ENCODE measurements at regions of chr5 and their contacts with region 1.

Region 1: GRCh38 chr5:57298295-57298984 is 124.6 kb downstream of the GPBP1 start:
- DNase-seq: peak; percentile 24
- H3K4me3 ChIP-seq: no peak overlapping the region
- CTCF ChIP-seq: peak; percentile 63

Region 2: DNA sequence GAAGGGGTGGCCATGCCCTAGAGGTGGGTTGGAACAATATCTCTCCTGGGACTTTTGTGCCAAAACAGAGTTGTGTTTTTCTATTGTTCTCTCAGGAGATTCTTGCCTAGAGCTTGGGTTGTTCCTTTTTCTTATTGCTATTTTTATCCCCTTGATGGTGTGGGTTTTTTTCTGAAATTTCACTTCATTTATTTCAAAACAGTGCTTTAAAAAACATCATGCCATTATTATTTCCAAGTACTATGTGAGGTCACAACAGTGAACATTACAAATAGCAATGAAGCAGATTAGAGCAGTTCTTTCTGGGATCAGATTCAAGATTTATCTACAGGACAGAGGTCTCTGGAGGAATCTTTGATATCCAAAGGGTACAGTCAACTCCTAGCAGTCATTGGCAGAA is 107.5 kb after region 1 on chr5:
- CTCF ChIA-PET with region 1: no interaction called
- POLR2A ChIA-PET with region 1: no interaction called
- DNase-seq: no peak
- H3K4me3 ChIP-seq: no peak overlapping the region
- CTCF ChIP-seq: no peak

Region 3: DNA sequence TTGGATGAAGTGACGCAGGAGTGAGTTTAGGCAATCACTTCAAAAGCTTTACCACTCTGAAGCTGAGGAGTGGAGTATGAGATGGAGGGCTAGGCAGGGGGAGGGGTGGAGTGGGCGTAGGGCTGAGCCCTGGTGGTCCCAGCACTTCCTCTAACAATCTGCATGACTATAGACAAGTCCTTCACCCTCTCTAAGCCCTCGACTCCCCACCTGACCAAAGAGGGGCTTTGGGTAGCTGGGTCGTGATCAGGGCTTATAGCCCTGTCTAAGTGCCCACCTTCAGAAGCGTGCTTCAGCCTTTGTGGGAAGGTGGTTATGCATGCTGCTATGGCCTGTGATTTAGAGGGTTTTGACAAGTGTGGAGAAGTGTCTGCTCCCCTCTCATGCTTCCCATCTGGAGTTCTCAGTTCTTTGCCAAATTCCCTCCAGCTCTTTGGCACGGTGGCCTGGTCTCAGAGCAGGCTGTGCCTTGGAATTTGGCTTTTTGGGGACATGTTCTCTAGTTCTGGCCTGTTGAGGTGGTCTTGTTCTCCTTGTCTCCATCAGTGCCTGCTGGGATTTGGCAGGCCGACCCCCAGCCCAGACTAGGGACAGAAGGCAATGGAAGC is 131.2 kb after region 1 on chr5:
- CTCF ChIA-PET with region 1: no interaction called
- POLR2A ChIA-PET with region 1: no interaction called
- DNase-seq: no peak
- H3K4me3 ChIP-seq: no peak overlapping the region
- CTCF ChIP-seq: no peak

Region 4: GRCh38 chr5:57494104-57495098 is 196.0 kb after region 1 on chr5:
- CTCF ChIA-PET with region 1: interaction called, 47 read pairs
- POLR2A ChIA-PET with region 1: no interaction called
- DNase-seq: peak; percentile 94
- H3K4me3 ChIP-seq: no peak overlapping the region
- CTCF ChIP-seq: no peak

Region 5: GRCh38 chr5:57538341-57538955 is 240.0 kb after region 1 on chr5:
- CTCF ChIA-PET with region 1: interaction called, 10 read pairs
- POLR2A ChIA-PET with region 1: no interaction called
- DNase-seq: peak; percentile 66
- H3K4me3 ChIP-seq: peak overlapping the region; percentile 15; the same call in 1 of the 2 replicates
- CTCF ChIP-seq: no peak

Region 6: DNA sequence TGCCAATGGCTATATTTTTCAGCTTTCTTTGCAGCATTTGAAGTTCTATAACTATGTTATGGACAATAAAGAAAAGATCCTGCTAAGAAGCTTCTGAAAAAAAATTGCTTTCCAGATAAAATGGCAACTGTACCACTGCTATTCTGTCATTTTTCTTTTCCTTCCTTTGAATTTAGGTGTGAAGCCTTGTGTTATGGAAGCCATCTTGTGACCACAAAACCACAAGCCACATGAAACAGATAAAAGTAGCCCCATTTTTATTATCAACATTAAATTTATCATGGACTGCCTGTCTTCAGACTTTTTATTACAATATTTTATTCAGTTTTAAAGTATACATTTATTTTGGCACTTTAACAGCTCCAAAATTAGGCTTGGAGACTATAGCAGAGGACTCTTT is 474.1 kb after region 1 on chr5:
- CTCF ChIA-PET with region 1: interaction called, 84 read pairs
- POLR2A ChIA-PET with region 1: no interaction called
- DNase-seq: no peak
- H3K4me3 ChIP-seq: no peak overlapping the region
- CTCF ChIP-seq: no peak

Measured in AG04449 (cell line).